ENCODE measurements at regions of chrX and their contacts with region 1.

Region 1: DNA sequence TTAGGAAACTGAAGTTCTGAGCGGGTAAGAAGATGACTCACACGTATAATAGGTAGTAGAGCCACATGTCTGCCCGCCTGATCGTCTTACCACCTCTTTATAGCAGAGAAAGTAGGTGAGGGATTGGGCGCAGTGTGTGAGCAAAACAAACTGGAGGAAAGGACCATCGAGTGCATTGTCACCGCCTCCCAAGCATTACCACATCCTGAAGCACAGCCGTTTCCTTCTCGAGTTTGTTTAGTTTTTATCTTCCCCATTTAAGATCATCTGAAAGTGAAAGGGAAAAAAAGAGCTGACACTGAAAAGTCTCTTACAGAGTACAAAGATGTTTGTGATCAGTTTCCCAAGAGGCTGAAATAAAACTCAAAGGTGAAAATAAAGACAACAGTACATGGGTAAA is 14.8 kb downstream of the PDK3 start:
- DNase-seq: peak; percentile 81
- ATAC-seq: peak; percentile 97
- H3K4me3 ChIP-seq: peak overlapping the region; percentile 42; the same call in 1 of the 2 replicates
- H3K27ac ChIP-seq: peak overlapping the region; percentile 80
- H3K4me1 ChIP-seq: no peaks in the 10 kb centered on the region
- H3K27me3 ChIP-seq: no peaks in the 10 kb centered on the region
- CTCF ChIP-seq: no peak
- EP300 ChIP-seq: no peak
- POLR2A ChIP-seq: peak; percentile 70
- RAD21 ChIP-seq: no peak

Region 2: GRCh38 chrX:24464836-24465531 is 14.9 kb before region 1 on chrX and contains the start of gene PDK3:
- CTCF ChIA-PET with region 1: interaction called, 21 read pairs
- POLR2A ChIA-PET with region 1: interaction called, 12 read pairs
- RAD21 ChIA-PET with region 1: interaction called, 10 read pairs
- SMC1A ChIA-PET with region 1: interaction called, 18 read pairs
- in situ Hi-C with region 1: no loop called
- intact Hi-C with region 1: loop called (anchors 1 kb)
- DNase-seq: peak; percentile 45
- ATAC-seq: peak; percentile 95
- H3K4me3 ChIP-seq: peak within 1 kb of the TSS; percentile 78
- H3K27ac ChIP-seq: peak within 1 kb of the TSS; percentile 73
- H3K4me1 ChIP-seq: peaks cover 6% of the 10 kb centered on the region; the same call in 1 of the 2 replicates
- H3K27me3 ChIP-seq: no peaks in the 10 kb centered on the region
- CTCF ChIP-seq: no peak
- EP300 ChIP-seq: no peak
- POLR2A ChIP-seq: peak; percentile 84
- RAD21 ChIP-seq: no peak
- polyA plus RNA-seq, gene PDK3: 4.2 to 6.4 TPM

Region 3: DNA sequence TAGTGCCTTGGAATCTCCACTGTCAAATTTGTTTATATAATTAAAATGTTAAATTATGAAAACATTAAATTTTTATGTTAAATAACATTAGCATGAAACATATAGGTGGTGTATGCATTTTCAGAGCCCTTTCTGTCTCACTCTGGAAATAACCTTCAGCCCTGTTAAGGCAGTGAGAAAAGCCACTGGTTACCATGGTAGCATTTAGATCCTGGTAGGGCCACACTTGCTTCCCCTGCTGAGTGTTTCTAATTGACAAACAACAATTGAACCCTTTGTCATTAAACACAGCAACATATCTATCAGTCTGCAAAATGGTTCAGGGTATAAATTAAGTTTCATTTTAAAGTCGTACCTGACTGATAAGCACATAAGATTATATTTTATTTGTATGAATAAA is 48.7 kb after region 1 on chrX:
- CTCF ChIA-PET with region 1: no interaction called
- POLR2A ChIA-PET with region 1: no interaction called
- RAD21 ChIA-PET with region 1: no interaction called
- SMC1A ChIA-PET with region 1: no interaction called
- in situ Hi-C with region 1: no loop called
- intact Hi-C with region 1: no loop called
- DNase-seq: no peak
- ATAC-seq: peak; percentile 71
- H3K4me3 ChIP-seq: no peak overlapping the region
- H3K27ac ChIP-seq: no peak overlapping the region
- H3K4me1 ChIP-seq: no peaks in the 10 kb centered on the region
- H3K27me3 ChIP-seq: no peaks in the 10 kb centered on the region
- CTCF ChIP-seq: no peak
- EP300 ChIP-seq: no peak
- POLR2A ChIP-seq: no peak
- RAD21 ChIP-seq: no peak